Lower leg skin (tissue), 4 donors: ENCODE measurements at regions of chr4 and their contacts with region 1.

Region 1: GRCh38 chr4:22410645-22411247 is 105.1 kb downstream of the ADGRA3 start:
- DNase-seq: no peak
- H3K4me3 ChIP-seq: no peak overlapping the region
- CTCF ChIP-seq: no peak
- POLR2A ChIP-seq: no peak

Region 2: DNA sequence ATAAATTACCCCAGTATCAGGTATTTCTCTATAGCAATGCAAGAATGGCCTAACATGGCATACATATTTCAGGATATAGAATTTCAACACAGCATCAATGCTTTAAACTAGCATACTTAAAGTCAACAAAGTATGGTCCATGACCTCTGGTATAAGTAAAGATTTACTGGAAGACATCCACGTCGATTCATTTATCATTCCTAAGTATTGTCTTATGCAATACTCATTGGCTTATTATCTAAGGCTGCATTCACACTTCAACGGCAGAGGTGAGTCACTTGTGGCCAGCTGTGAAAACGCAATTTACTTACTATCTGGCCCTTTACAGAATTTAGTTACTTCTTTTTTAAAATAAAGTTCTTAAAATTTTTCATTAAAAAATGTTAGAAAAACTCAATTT is 62.5 kb after region 1 on chr4:
- intact Hi-C with region 1: no loop called
- DNase-seq: no peak
- H3K4me3 ChIP-seq: no peak overlapping the region
- CTCF ChIP-seq: no peak
- POLR2A ChIP-seq: no peak

Region 3: GRCh38 chr4:22546299-22546698 is 135.6 kb after region 1 on chr4:
- intact Hi-C with region 1: no loop called
- DNase-seq: no peak
- H3K4me3 ChIP-seq: no peak overlapping the region
- CTCF ChIP-seq: no peak
- POLR2A ChIP-seq: no peak

Region 4: DNA sequence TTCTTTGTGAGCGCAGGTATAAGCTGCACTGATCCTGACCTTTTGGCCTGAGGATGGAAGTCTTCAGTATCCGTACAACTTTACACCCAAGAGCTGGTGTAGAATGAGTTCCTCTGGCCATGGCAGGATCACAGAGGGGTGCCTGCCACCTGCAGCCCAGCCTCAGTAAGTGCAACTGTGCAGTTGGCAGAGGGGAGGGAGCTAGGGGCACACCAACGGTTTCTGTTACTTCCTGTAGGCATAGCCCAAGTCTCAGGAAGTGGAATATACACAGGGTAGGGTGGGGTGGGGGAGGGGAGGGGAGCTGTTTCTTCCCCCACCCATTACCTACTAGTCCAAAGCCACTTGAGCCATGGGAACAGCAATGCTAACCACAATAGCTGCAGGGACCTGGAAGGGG is 196.6 kb after region 1 on chr4:
- intact Hi-C with region 1: loop called (anchors 10 kb)
- DNase-seq: no peak
- H3K4me3 ChIP-seq: no peak overlapping the region
- CTCF ChIP-seq: no peak
- POLR2A ChIP-seq: no peak

Region 5: DNA sequence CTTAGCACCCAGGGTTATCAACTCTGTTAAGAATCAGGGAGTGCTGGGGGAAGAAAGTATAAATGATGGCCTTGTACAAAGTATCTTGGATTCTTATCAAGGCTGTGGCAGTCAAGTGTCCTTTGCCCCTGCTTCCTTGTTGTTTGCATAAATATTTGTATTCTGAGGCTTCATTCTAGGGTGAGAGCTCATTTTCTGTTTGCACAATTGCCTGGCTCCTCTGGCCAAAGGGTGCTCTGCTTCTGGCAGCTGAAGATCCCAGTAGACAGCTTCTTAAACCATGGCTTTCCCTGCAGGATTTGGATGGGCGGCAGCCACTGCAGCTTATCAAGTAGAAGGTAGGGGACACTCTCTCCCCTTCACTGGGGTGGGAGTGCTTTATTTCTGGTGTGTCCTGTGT is 282.0 kb after region 1 on chr4 and contains the start of gene GBA3:
- intact Hi-C with region 1: loop called (anchors 5 kb)
- DNase-seq: no peak
- H3K4me3 ChIP-seq: no peak within 1 kb of the TSS
- CTCF ChIP-seq: no peak
- POLR2A ChIP-seq: no peak
- total RNA-seq, gene GBA3: 0.52 TPM in 1 of 4 donors, not detected in the others